OCI-LY7 (cell line): ENCODE measurements at regions of chr6 and their contacts with region 1.

Region 1: DNA sequence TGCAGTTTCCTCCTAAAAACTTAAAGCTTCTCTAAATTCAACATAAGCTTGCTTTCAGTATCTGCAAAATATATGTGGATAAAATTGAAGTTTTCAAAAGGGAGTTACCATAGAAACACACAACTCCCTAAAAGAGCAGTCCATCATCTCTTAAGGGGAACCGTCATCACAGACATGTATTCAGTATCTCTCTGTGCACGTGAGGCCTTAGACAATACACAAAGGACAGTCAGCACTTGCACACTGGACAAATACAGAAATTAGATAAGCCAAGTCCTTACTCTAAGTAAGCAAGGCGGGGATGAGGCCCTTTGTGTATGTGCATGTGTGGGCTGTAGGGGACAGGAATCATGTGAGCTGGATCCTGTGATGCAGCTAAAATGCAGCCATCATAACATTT is 136.6 kb downstream of the BACH2 start:
- DNase-seq: no peak
- H3K4me3 ChIP-seq: no peak overlapping the region
- H3K27ac ChIP-seq: no peak overlapping the region
- H3K4me1 ChIP-seq: peaks cover 4% of the 10 kb centered on the region
- CTCF ChIP-seq: no peak

Region 2: DNA sequence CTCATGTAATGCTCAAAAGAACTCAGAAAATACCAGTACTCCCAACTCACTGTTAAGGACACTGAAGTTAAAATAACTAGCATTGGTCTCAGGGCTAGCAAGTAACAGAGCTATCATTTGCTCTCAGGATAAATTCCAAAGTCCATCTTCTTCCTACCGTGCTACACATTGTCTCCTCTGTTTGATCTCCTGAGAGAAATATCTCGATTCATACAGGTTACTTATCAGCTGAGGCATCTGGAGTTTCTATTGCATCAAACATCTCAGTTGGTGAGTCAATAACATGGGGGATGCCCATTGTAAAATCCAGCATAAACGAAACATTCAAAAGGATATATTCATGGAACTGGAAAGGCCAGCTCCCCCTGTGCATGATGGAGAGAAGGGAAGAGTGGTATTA is 10.7 kb before region 1 on chr6:
- CTCF ChIA-PET with region 1: no interaction called
- POLR2A ChIA-PET with region 1: interaction called, 10 read pairs
- intact Hi-C with region 1: no loop called
- DNase-seq: no peak
- H3K4me3 ChIP-seq: no peak overlapping the region
- H3K27ac ChIP-seq: no peak overlapping the region
- H3K4me1 ChIP-seq: peaks cover 17% of the 10 kb centered on the region
- CTCF ChIP-seq: no peak

Region 3: DNA sequence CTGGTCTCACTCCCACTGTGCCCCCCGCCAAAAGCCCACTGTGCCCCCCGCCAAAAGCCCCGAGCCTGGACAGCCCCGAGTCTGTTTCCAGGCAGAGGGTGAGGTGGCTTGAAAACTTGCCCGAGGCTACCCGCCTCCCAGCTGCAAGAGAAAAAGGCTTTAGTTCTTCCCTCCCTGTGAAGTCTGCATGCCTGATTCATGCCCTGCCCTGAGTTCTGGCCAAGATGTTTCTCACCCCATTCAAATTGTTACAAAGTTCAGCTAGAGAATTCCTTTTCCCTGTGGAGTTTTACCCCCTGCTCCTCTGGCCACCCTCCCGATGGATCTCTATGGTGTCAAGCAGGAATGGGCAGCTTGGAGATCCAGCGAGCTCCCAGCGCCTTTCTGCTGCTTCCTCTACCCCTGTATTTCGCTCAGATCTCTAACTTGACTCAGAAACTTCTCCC is 725.6 kb after region 1 on chr6:
- CTCF ChIA-PET with region 1: no interaction called
- POLR2A ChIA-PET with region 1: no interaction called
- intact Hi-C with region 1: no loop called
- DNase-seq: no peak
- H3K4me3 ChIP-seq: no peak overlapping the region
- H3K27ac ChIP-seq: no peak overlapping the region
- H3K4me1 ChIP-seq: no peaks in the 10 kb centered on the region
- CTCF ChIP-seq: no peak